ENCODE measurements at regions of chr20 and their contacts with region 1.

Region 1: DNA sequence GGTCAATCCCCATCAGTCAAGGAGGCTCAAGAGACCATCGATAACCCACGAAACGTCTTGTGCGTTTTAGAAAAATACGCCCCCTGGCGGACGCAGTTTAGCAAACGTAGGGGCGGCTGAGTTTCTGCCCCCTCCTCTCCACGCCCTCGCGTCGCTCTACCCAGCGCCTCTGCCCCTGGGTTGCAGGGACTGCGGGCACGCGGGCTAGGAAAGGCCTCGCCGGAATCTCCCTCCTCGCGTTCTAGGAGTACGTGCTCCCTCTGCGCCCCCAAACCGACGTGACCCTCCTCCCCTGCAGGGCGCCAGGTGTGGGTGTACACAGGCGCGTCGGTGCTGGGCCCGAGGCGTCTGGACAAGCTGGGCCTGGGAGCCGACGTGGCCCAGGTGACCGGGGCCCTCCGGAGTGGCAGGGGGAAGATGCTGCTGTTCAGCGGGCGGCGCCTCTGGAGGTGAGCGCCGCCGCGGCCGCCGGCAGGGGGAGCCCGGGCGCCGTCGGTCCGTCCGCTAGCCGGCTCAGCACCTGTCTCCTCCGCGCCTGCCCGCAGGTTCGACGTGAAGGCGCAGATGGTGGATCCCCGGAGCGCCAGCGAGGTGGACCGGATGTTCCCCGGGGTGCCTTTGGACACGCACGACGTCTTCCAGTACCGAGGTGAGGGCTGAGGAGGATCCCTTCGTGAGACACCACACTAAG is 5.3 kb downstream of the MMP9 start:
- DNase-seq: peak; percentile 58
- H3K4me3 Mint-ChIP-seq: peak overlapping the region; percentile 38
- H3K27ac Mint-ChIP-seq: no peak overlapping the region
- H3K4me1 Mint-ChIP-seq: peaks cover 52% of the 10 kb centered on the region
- H3K27me3 Mint-ChIP-seq: peaks cover 59% of the 10 kb centered on the region

Region 2: DNA sequence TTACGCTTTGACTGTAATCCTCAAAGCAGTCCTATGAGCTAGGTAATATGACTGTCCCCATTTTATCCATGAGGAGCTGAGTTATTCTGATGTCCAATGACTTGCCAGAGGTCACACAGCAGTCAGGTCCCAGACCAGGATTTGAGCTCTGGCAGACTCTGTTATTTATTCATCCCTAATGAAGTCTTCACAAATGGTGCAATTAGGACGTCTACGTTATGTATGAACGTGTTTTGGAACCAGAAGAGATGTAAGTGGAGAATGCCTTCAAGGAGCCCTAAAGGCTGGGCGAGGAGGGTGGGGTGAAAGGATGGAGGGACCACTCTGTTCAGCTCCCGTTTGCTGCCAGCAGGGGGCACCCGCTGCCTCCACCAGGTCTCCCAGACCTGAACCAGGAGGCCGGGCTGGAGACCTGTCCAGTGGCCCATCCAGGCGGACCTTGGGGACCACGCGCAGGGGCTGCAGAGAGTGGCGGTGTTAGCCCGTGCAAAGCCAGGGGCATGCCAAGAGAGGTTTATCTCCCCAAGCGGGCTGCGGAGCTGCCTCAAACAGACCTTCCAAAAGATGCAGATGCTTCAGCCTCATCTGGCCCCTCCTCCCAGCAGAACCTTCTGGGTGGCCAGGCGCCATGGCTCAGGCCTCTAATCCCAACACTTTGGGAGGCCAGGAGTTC is 26.7 kb before region 1 on chr20:
- intact Hi-C with region 1: loop called (anchors 1 kb)
- DNase-seq: peak; percentile 69
- H3K4me3 Mint-ChIP-seq: no peak overlapping the region
- H3K27ac Mint-ChIP-seq: no peak overlapping the region
- H3K4me1 Mint-ChIP-seq: peaks cover 13% of the 10 kb centered on the region
- H3K27me3 Mint-ChIP-seq: peaks cover 34% of the 10 kb centered on the region

Region 3: GRCh38 chr20:46174469-46175128 is 160.6 kb after region 1 on chr20:
- intact Hi-C with region 1: loop called (anchors 1 kb)
- DNase-seq: peak; percentile 51
- H3K4me3 Mint-ChIP-seq: no peak overlapping the region
- H3K27ac Mint-ChIP-seq: no peak overlapping the region
- H3K4me1 Mint-ChIP-seq: no peaks in the 10 kb centered on the region
- H3K27me3 Mint-ChIP-seq: peaks cover 38% of the 10 kb centered on the region

Region 4: DNA sequence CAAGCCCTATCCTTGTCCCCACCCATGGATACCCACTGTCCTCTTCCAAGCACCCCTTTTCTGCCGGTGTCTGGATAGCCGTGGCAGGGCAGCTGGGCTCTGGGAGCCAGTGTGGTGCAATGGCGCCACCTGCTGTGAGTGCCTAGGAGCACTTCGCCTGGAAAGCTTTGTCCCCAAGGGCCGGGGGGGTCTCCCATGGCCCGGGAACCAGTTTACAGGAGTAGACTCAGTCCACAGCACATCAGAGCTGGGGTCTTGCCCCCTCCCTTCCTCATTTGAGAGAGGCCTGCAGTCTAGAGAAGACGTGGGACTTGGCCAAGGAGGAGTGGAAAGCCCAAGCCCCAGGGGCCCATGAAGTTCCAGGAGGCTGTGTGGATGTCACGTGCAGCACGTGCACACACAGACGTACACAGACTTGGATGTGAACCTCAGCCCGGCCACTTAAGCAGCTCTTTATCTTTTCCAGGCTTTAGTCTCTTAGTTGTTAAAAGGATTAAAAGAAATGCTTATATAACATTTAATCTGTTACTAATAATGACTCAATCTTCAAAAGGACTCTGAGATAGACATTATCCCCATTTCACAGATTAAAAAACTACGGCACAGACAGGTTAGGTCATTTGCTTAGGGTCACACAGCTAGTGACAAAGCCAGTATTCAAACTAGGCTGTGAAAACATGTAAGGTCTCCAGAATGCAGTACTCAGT is 335.2 kb after region 1 on chr20:
- intact Hi-C with region 1: loop called (anchors 5 kb)
- DNase-seq: peak; percentile 22
- H3K4me3 Mint-ChIP-seq: no peak overlapping the region
- H3K27ac Mint-ChIP-seq: no peak overlapping the region
- H3K4me1 Mint-ChIP-seq: peaks cover 9% of the 10 kb centered on the region
- H3K27me3 Mint-ChIP-seq: no peaks in the 10 kb centered on the region

Measured in activated T-helper 1 cell treated with anti-CD3 and anti-CD28 coated beads, Interleukin-12 subunit alpha, Interleukin-12 subunit beta, Interleukin-2, Interleukin-4 antibody, amounts not matched to agents 30 ng/mL and 10 ng/mL and 1 ng/mL, durations not matched to agents 14 hours and 24 hours and 36 hours (primary cell).